Natural killer cell (primary cell): ENCODE measurements at regions of chr17 and their contacts with region 1.

Region 1: GRCh38 chr17:30021708-30022317 is 80.4 kb downstream of the EFCAB5 start:
- DNase-seq: peak in 1 of 2 donors; percentile 73
- ATAC-seq: peak; percentile 73 to 78 (median 76)
- H3K4me3 ChIP-seq: no peak overlapping the region
- H3K4me3 Mint-ChIP-seq: no peak overlapping the region
- H3K27ac ChIP-seq: no peak overlapping the region
- H3K27ac Mint-ChIP-seq: no peak overlapping the region
- H3K4me1 ChIP-seq: no peaks in the 10 kb centered on the region
- H3K4me1 Mint-ChIP-seq: no peaks in the 10 kb centered on the region
- H3K27me3 ChIP-seq: peaks cover 2% of the 10 kb centered on the region
- H3K27me3 Mint-ChIP-seq: peaks cover 0 to 3% of the 10 kb centered on the region in 2 donors
- CTCF ChIP-seq: peak; percentile 90

Region 2: DNA sequence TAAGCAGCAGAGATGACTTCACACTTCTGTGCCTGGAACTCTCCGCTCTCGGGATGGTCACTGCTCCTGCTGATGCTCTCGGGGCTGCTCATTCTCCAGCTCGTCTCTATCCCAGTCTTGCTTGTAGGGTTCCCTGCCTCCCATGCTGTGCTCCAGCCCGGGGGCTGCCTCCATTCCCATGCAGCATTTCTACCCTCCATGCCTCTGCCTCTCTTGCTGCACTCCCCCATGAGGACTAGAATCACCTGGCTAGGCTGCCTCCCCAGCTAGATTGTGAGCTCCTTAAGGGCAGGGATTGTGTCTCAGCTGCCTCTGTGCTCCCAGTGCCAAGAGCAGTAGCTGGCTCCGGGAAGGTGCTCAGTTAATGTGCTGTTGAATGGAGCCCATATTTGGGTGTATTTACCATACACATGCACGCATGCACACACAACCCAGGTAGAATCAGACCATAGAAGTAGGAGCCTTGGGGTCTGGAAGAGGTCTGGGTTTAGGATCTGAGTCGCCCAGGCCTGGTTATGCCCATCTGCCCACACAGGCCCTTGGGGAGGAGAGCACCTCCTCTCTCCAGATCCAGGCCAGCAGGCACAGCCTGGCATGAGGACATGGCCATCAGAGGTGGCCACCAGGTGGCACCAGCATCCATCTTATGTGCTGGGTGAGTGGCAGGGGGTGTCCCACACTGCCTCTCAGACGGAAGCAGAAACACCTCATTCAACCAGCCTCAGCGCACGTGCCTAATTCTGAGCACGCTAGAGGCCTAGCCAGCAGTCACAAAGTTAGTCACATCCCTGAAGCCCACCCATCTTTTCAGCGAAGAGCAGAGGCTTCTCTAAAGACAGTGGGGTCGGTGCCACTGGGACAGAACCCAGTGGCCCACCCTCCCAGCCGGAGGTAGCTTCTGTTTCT is 441.7 kb before region 1 on chr17:
- intact Hi-C with region 1: loop called (anchors 1 kb)
- DNase-seq: peak; percentile 85 to 96
- ATAC-seq: peak; percentile 97 to 99 (median 99)
- H3K4me3 ChIP-seq: no peak overlapping the region
- H3K4me3 Mint-ChIP-seq: no peak overlapping the region
- H3K27ac ChIP-seq: peak overlapping the region; percentile 21
- H3K27ac Mint-ChIP-seq: peak overlapping the region; percentile 37 to 52
- H3K4me1 ChIP-seq: peaks cover 17% of the 10 kb centered on the region
- H3K4me1 Mint-ChIP-seq: peaks cover 9 to 24% of the 10 kb centered on the region in 2 donors
- H3K27me3 ChIP-seq: no peaks in the 10 kb centered on the region
- H3K27me3 Mint-ChIP-seq: no peaks in the 10 kb centered on the region
- CTCF ChIP-seq: peak; percentile 85

Region 3: GRCh38 chr17:30113213-30113612 is 91.4 kb after region 1 on chr17:
- intact Hi-C with region 1: no loop called
- DNase-seq: peak in 1 of 2 donors; percentile 26
- ATAC-seq: peak in 1 of 3 donors; percentile 52
- H3K4me3 ChIP-seq: no peak overlapping the region
- H3K4me3 Mint-ChIP-seq: peak overlapping the region; percentile 45
- H3K27ac ChIP-seq: no peak overlapping the region
- H3K27ac Mint-ChIP-seq: peak overlapping the region; percentile 56 to 65
- H3K4me1 ChIP-seq: no peaks in the 10 kb centered on the region
- H3K4me1 Mint-ChIP-seq: peaks cover 25 to 31% of the 10 kb centered on the region in 2 donors
- H3K27me3 ChIP-seq: no peaks in the 10 kb centered on the region
- H3K27me3 Mint-ChIP-seq: peaks cover 2 to 11% of the 10 kb centered on the region in 2 donors
- CTCF ChIP-seq: no peak